Pancreas (tissue), 10 donors: ENCODE measurements at regions of chr11 and their contacts with region 1.

Region 1: DNA sequence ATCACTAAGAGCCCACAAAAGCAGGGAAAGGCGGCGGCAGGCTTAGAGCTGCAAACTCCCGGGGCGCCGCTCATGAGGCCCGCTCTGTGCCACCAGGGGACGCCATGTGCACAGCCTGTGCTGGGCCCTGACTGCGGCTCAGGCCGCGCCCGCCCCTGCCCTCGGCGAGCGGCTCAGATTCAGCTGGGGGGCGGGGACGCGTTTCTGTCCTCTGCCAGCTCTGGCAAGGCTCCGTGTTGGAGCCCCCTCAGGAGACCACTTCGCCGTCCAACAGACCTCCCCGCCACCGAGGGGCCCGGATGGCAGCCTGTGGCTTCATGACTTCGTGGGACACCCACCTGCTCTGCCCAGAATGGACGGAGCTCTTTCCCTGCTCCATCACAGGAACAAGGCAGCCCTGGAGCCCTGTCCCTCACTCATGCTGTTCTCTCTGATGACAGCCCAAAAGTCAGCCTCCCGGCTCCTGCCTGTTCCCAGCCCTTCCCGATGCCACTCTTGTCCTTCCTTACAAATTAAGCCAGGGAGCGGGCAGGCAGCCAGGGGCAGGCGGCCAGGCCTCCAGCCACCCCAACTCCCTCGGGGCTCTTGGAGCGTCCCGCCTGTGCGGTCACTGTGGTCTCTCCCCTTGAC is 69.1 kb downstream of the NAT10 start:
- DNase-seq: peak; percentile 65 to 93 (median 80)
- ATAC-seq: peak; percentile 99 to 100 (median 100)
- H3K4me3 ChIP-seq: peak overlapping the region in 2 of 4 donors; percentile 10 to 32
- H3K27ac ChIP-seq: no peak overlapping the region
- H3K4me1 ChIP-seq: no peaks in the 10 kb centered on the region
- H3K27me3 ChIP-seq: no peaks in the 10 kb centered on the region
- CTCF ChIP-seq: peak; percentile 74 to 90 (median 86)

Region 2: GRCh38 chr11:33716236-33716635 is 458.3 kb before region 1 on chr11:
- intact Hi-C with region 1: no loop called
- DNase-seq: no peak
- ATAC-seq: peak in 2 of 4 donors; percentile 59 to 72
- H3K4me3 ChIP-seq: no peak overlapping the region
- H3K27ac ChIP-seq: peak overlapping the region in 1 of 4 donors; percentile 17
- H3K4me1 ChIP-seq: peaks cover 15 to 32% (median 24%) of the 10 kb centered on the region in 3 donors
- H3K27me3 ChIP-seq: no peaks in the 10 kb centered on the region
- CTCF ChIP-seq: peak in 1 of 4 donors; percentile 18

Region 3: GRCh38 chr11:34357701-34358257 is 183.3 kb after region 1 on chr11 and contains the start of gene ABTB2:
- intact Hi-C with region 1: loop called (anchors 5 to 10 kb)
- DNase-seq: peak; percentile 96 to 98 (median 98)
- ATAC-seq: peak; percentile 88 to 94 (median 90)
- H3K4me3 ChIP-seq: peak within 1 kb of the TSS; percentile 36 to 71 (median 46)
- H3K27ac ChIP-seq: peak within 1 kb of the TSS; percentile 56 to 84 (median 78)
- H3K4me1 ChIP-seq: peaks cover 5 to 7% (median 6%) of the 10 kb centered on the region in 3 donors
- H3K27me3 ChIP-seq: no peaks in the 10 kb centered on the region
- CTCF ChIP-seq: no peak
- total RNA-seq, gene ABTB2: 0.97 to 4.4 (median 2.2) TPM